Aorta (tissue), 5 donors: ENCODE measurements at regions of chr9 and their contacts with region 1.

Region 1: GRCh38 chr9:129884220-129885017 is 49.2 kb downstream of the USP20 start:
- DNase-seq: peak; percentile 94 to 96
- ATAC-seq: peak; percentile 87
- H3K4me3 ChIP-seq: no peak overlapping the region
- H3K27ac ChIP-seq: peak overlapping the region; percentile 21 to 32
- H3K4me1 ChIP-seq: no peaks in the 10 kb centered on the region
- H3K27me3 ChIP-seq: no peaks in the 10 kb centered on the region

Region 2: DNA sequence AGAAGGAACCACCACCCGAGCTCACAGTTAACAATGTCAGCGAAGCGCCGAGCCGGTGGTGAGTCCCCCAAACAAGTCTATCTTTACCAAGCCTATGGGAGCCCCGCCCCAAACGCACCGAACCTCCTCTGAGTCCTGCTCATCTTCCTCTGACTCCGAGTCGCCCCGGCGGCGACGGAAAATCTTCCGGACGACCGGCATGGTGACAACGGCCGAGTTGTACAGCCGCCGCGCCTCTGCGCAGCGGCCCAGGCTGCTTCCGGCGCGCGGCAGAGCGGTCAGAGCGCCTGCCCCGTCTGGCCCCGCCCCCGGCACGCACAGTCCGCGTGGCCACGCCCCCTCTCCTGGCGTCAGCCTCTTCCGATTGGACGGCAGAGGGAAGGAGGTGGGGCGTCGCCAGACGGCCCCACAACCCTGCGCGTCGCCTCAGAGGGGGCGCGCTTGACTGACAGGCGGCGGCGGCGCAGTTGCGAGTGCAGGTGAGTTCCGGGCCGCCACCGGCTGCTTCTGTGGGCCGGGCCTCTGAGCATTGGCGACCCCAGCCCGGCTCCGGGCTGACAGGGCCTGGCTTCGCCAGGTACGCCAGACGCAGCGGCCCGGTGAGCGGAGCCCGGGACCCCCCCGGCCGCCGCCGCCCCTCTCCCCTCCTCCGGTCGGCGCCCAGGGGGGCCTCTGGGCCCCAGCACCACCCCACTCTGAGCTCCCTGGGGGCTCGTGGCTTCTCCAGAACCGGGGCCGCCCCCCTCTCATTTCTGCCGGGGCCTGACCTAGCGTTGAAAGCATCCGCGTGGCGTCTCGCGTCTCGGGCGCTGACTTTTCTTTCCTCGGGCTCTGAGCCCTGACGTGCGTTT is 49.2 kb before region 1 on chr9 and contains the starts of genes C9orf78 and USP20:
- intact Hi-C with region 1: loop called in 1 of 2 experiments (anchors 5 kb)
- DNase-seq: peak; percentile 97 to 98
- ATAC-seq: peak; percentile 99
- H3K4me3 ChIP-seq: peak within 1 kb of the TSS; percentile 78 to 86
- H3K27ac ChIP-seq: peak within 1 kb of the TSS; percentile 43 to 69
- H3K4me1 ChIP-seq: no peaks in the 10 kb centered on the region
- H3K27me3 ChIP-seq: no peaks in the 10 kb centered on the region
- total RNA-seq, gene C9orf78: 33.8 to 38.1 TPM
- total RNA-seq, gene USP20: 36.4 to 54.2 TPM

Region 3: DNA sequence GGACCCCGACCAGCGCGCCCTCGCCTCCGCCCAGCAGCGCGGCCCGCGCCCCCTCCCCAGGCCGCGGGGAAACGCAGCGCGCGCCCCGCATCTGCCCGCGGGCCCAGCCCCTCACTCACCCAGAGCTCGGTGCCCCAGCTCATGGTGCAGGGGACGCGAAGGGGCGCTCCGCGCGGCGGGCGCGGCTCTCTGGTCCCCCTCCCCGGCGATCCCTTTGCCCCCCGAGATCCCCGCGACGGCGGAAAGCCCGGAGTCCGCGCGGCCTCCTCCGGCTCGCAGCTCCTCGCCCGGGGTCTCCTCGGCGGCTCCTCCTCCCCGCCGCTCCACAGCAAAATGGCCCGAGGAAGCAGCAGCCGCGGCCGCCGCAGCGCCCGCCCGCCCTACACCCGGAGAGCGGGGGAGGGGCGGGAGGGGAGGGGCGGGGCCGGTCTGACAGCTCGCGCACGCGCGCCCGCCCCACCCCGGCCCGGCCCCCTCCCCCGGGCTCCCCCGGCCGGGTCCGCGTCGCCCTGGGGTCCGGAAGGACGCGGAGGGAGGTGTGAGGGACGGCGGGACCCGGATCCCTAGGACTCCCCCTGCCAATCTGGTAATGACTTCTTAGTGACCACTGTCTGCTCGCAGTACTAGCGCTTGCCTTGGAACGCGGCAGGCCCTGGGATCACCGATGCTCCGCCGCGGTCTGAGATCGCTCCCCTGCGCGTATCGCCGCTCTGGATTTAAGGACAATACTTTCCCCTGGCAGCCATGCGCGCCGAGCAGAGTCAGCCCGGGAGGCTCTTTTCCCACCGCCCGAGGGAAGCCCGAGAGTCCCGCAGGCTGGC is 158.6 kb after region 1 on chr9 and contains the start of gene FNBP1:
- intact Hi-C with region 1: loop called (anchors 5 kb)
- DNase-seq: peak; percentile 88 to 94
- ATAC-seq: peak; percentile 95
- H3K4me3 ChIP-seq: peak within 1 kb of the TSS; percentile 90 to 96
- H3K27ac ChIP-seq: peak within 1 kb of the TSS; percentile 46 to 79
- H3K4me1 ChIP-seq: no peaks in the 10 kb centered on the region
- H3K27me3 ChIP-seq: no peaks in the 10 kb centered on the region
- total RNA-seq, gene FNBP1: 92.2 to 92.9 TPM